ENCODE measurements at regions of chr6 and their contacts with region 1.

Region 1: GRCh38 chr6:142692942-142693341 is 252.0 kb downstream of the HIVEP2 start:
- DNase-seq: peak; percentile 91
- ATAC-seq: peak; percentile 98
- H3K4me3 ChIP-seq: no peak overlapping the region
- H3K27ac ChIP-seq: no peak overlapping the region
- H3K4me1 ChIP-seq: peaks cover 3% of the 10 kb centered on the region
- H3K27me3 ChIP-seq: no peaks in the 10 kb centered on the region
- CTCF ChIP-seq: peak; percentile 95
- POLR2A ChIP-seq: peak; percentile 54; the same call in 1 of the 2 replicates
- RAD21 ChIP-seq: peak; percentile 99

Region 2: DNA sequence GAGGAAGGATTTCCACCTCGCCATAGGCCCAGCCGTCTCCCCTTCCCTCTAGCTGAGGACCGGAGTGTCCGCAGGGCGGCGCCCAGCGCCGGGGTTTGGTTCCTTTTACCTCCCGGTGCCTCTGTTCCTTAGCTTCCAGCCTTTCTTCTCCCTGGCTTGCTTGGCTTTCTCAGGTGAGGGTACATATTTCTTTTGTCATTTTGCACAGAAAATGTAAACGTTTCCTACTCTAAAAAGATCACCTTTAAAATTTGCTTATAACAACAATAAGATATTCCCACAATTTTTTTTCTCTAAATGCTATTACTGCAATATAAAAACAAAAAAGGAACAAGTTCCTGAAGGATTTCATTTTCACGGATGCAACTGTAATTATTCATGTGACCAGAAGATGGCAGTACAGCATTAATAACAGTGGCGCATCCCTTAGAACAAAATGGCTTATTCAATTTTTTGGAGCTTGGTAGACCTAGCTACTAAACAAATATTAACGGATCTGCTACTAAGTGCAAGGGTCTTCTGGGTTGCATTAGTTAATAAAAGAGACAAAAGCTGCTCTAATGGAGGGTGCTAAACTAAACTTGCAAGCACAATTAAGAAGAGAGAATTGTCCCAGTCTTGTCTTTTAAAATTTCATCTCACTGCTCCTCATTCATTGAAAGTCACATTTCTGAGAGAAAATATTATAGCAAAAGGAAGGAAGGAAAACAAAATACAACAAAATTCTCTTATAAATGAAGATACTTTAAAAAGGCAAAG is 218.2 kb before region 1 on chr6:
- CTCF ChIA-PET with region 1: no interaction called
- POLR2A ChIA-PET with region 1: no interaction called
- dilution Hi-C with region 1: no loop called
- in situ Hi-C with region 1: no loop called
- intact Hi-C with region 1: loop called (anchors 1 kb)
- DNase-seq: peak; percentile 76
- ATAC-seq: peak; percentile 93
- H3K4me3 ChIP-seq: no peak overlapping the region
- H3K27ac ChIP-seq: no peak overlapping the region
- H3K4me1 ChIP-seq: no peaks in the 10 kb centered on the region; the same call in 1 of the 2 replicates
- H3K27me3 ChIP-seq: no peaks in the 10 kb centered on the region
- CTCF ChIP-seq: peak; percentile 83
- POLR2A ChIP-seq: no peak
- RAD21 ChIP-seq: peak; percentile 85

Region 3: GRCh38 chr6:142946181-142946923 is 253.4 kb after region 1 on chr6:
- CTCF ChIA-PET with region 1: no interaction called
- POLR2A ChIA-PET with region 1: no interaction called
- dilution Hi-C with region 1: no loop called
- in situ Hi-C with region 1: loop called (anchors 5 kb)
- intact Hi-C with region 1: loop called (anchors 1 kb)
- DNase-seq: peak; percentile 98
- ATAC-seq: peak; percentile 75
- H3K4me3 ChIP-seq: peak overlapping the region; percentile 74
- H3K27ac ChIP-seq: peak overlapping the region; percentile 87
- H3K4me1 ChIP-seq: peaks cover 3% of the 10 kb centered on the region
- H3K27me3 ChIP-seq: no peaks in the 10 kb centered on the region
- CTCF ChIP-seq: no peak
- POLR2A ChIP-seq: peak; percentile 91
- RAD21 ChIP-seq: no peak; the same call in 1 of the 2 replicates

Region 4: GRCh38 chr6:143026696-143027449 is 333.9 kb after region 1 on chr6:
- CTCF ChIA-PET with region 1: interaction called, 4 read pairs
- POLR2A ChIA-PET with region 1: no interaction called
- dilution Hi-C with region 1: no loop called
- in situ Hi-C with region 1: loop called (anchors 5 kb)
- intact Hi-C with region 1: loop called (anchors 1 kb)
- DNase-seq: peak; percentile 24
- ATAC-seq: peak; percentile 61
- H3K4me3 ChIP-seq: no peak overlapping the region
- H3K27ac ChIP-seq: no peak overlapping the region
- H3K4me1 ChIP-seq: no peaks in the 10 kb centered on the region
- H3K27me3 ChIP-seq: no peaks in the 10 kb centered on the region
- CTCF ChIP-seq: peak; percentile 72
- POLR2A ChIP-seq: no peak
- RAD21 ChIP-seq: peak; percentile 80

Region 5: GRCh38 chr6:143279385-143279784 is 586.4 kb after region 1 on chr6:
- CTCF ChIA-PET with region 1: no interaction called
- POLR2A ChIA-PET with region 1: no interaction called
- dilution Hi-C with region 1: no loop called
- in situ Hi-C with region 1: no loop called
- intact Hi-C with region 1: loop called (anchors 1 kb)
- DNase-seq: peak; percentile 21
- ATAC-seq: no peak
- H3K4me3 ChIP-seq: no peak overlapping the region
- H3K27ac ChIP-seq: no peak overlapping the region
- H3K4me1 ChIP-seq: no peaks in the 10 kb centered on the region
- H3K27me3 ChIP-seq: no peaks in the 10 kb centered on the region
- CTCF ChIP-seq: peak; percentile 27; the same call in 1 of the 2 replicates
- POLR2A ChIP-seq: no peak
- RAD21 ChIP-seq: peak; percentile 57

Region 6: DNA sequence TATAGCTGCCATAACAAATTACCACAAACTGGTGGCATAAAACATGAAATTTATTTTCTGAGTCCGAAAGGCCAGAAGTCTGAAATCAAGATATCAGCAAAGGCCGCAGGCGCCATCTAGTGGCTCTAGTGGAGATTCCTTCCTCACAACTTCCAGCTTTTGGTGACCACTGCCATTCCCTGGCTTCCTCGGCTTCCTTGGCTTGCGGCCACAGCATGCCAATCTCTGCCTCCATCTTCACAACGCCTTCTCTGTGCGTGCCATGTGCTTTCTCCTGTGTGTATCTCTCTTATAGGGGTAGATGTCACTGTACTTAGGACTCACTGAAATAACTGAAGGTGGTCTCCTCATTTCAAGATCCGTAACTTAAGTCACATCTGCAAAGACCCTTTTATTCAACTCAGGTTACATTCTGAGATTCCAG is 1320.6 kb after region 1 on chr6:
- CTCF ChIA-PET with region 1: no interaction called
- POLR2A ChIA-PET with region 1: no interaction called
- dilution Hi-C with region 1: no loop called
- in situ Hi-C with region 1: loop called (anchors 25 kb)
- intact Hi-C with region 1: no loop called
- DNase-seq: peak; percentile 71
- ATAC-seq: peak; percentile 90
- H3K4me3 ChIP-seq: no peak overlapping the region
- H3K27ac ChIP-seq: no peak overlapping the region
- H3K4me1 ChIP-seq: peaks cover 2% of the 10 kb centered on the region; the same call in 1 of the 2 replicates
- H3K27me3 ChIP-seq: peaks cover 2% of the 10 kb centered on the region
- CTCF ChIP-seq: peak; percentile 93
- POLR2A ChIP-seq: no peak
- RAD21 ChIP-seq: peak; percentile 93